A673 (cell line): ENCODE measurements at regions of chr12 and their contacts with region 1.

Region 1: DNA sequence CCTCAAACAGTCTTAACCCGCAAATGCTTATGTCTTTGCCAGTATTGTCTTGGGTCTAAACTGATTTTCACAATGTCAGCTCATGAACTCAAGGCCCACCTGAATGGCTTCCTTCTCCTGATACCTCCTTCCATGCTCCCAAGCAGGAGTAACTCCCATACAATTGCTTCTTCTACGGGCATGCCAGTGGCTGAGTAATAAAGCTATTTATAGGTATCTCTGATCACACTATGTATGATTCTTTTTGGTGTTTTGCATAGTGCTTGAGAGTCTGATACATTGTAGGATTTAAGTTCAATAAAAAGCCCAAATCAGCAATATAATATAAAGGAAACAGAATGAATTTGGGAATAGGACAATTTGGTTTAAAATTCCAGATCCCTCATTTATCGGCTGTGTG is 235.0 kb upstream of the DCN start:
- DNase-seq: no peak
- H3K4me3 ChIP-seq: no peak overlapping the region
- H3K27ac ChIP-seq: no peak overlapping the region
- H3K4me1 ChIP-seq: no peaks in the 10 kb centered on the region
- H3K27me3 ChIP-seq: no peaks in the 10 kb centered on the region
- CTCF ChIP-seq: no peak

Region 2: DNA sequence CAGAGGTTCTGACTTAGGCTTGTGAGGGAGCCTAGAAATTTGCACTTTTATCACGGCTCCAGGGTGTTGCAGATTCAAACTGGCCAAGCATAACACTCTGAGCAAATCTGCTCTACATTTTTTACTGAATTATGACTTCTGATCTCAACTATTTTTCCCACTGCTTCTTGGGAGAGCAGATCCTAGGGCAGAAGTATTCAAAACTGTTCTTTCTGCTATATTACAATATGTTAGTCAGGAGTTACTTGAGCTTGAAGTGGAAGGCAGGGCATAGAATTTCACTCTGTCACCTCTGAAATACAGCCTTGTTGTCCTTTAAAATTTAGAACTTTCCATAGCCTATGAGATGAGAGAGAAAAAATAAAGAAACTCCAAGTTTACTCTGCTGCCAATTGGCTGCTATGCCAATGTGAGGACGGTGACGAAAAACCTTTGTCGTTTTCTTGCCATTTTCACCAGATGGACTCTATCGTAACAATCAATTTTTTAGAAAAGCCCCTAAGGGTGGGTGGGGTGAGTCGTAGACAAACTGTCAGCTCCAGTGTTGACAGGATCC is 343.4 kb before region 1 on chr12:
- CTCF ChIA-PET with region 1: no interaction called
- POLR2A ChIA-PET with region 1: interaction called, 13 read pairs
- intact Hi-C with region 1: no loop called
- DNase-seq: no peak
- H3K4me3 ChIP-seq: no peak overlapping the region
- H3K27ac ChIP-seq: no peak overlapping the region
- H3K4me1 ChIP-seq: no peaks in the 10 kb centered on the region
- H3K27me3 ChIP-seq: no peaks in the 10 kb centered on the region
- CTCF ChIP-seq: no peak